Activated naive CD4-positive, alpha-beta T cell treated with anti-CD3 and anti-CD28 coated beads for 36 hours (primary cell): ENCODE measurements at regions of chr2 and their contacts with region 1.

Region 1: GRCh38 chr2:216742411-216742810 is 47.1 kb upstream of the IGFBP5 start:
- DNase-seq: no peak
- H3K4me3 Mint-ChIP-seq: no peak overlapping the region
- H3K27ac Mint-ChIP-seq: no peak overlapping the region
- H3K4me1 Mint-ChIP-seq: no peaks in the 10 kb centered on the region
- H3K27me3 Mint-ChIP-seq: no peaks in the 10 kb centered on the region

Region 2: GRCh38 chr2:216683846-216684507 is 58.4 kb before region 1 on chr2:
- CTCF ChIA-PET with region 1: interaction called, 3 read pairs
- intact Hi-C with region 1: loop called (anchors 1 kb)
- DNase-seq: no peak
- H3K4me3 Mint-ChIP-seq: no peak overlapping the region
- H3K27ac Mint-ChIP-seq: no peak overlapping the region
- H3K4me1 Mint-ChIP-seq: peaks cover 2% of the 10 kb centered on the region
- H3K27me3 Mint-ChIP-seq: peaks cover 27% of the 10 kb centered on the region